CD14-positive monocyte (primary cell): ENCODE measurements at regions of chr1 and their contacts with region 1.

Region 1: DNA sequence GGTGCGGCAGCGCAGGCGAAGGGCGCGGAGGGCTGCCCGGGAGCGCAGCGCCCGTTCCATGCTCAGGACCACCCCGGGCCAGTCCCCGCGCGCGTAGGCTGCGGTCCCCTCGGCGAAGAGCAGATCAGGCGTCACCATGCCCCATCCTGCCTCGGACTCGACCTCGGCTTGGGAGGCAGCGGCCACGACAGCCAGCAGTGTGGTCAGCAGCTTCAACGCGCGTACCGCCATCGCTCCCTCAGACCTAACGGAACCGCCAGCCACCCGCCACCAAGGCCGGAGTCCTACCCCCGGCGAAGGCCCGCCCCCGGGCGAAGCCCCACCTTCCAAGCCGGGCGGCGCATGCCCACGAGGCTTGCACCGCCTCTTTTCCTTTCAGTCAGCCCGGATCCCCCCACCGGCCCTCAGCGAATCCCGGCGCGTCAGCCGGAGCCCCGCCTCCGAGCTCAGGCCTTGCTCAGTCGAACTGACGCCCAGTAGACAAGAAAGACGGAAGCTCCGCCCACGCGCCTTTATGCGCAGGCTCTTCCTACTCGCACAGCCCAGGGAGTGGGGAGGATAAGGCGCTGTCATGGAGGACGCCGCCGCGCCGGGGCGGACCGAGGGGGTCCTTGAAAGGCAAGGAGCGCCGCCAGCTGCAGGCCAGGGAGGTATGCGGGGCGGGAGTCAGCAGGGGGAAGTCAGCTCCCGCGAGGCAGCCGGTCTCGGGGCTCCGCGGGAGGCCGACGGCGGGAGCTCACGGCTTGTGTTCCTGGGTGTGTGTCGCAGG is at the starts of genes C1orf50 and P3H1:
- DNase-seq: peak; percentile 98 to 100 (median 99)
- H3K4me3 ChIP-seq: peak within 1 kb of the TSS; percentile 87 to 94 (median 88)
- H3K4me3 Mint-ChIP-seq: peak within 1 kb of the TSS in 1 of 2 donors; percentile 95
- H3K27ac ChIP-seq: peak within 1 kb of the TSS; percentile 41 to 90
- H3K27ac Mint-ChIP-seq: peak within 1 kb of the TSS in 6 of 7 donors; percentile 86 to 96 (median 93)
- H3K4me1 ChIP-seq: peaks cover 24 to 33% of the 10 kb centered on the region in 2 donors
- H3K4me1 Mint-ChIP-seq: peaks cover 24% of the 10 kb centered on the region
- H3K27me3 ChIP-seq: no peaks in the 10 kb centered on the region
- H3K27me3 Mint-ChIP-seq: no peaks in the 10 kb centered on the region
- CTCF ChIP-seq: no peak
- polyA plus RNA-seq, gene C1orf50: 3.7 to 9.2 (median 4.3) TPM
- polyA plus RNA-seq, gene P3H1: 16.8 to 56.9 (median 16.9) TPM

Region 2: DNA sequence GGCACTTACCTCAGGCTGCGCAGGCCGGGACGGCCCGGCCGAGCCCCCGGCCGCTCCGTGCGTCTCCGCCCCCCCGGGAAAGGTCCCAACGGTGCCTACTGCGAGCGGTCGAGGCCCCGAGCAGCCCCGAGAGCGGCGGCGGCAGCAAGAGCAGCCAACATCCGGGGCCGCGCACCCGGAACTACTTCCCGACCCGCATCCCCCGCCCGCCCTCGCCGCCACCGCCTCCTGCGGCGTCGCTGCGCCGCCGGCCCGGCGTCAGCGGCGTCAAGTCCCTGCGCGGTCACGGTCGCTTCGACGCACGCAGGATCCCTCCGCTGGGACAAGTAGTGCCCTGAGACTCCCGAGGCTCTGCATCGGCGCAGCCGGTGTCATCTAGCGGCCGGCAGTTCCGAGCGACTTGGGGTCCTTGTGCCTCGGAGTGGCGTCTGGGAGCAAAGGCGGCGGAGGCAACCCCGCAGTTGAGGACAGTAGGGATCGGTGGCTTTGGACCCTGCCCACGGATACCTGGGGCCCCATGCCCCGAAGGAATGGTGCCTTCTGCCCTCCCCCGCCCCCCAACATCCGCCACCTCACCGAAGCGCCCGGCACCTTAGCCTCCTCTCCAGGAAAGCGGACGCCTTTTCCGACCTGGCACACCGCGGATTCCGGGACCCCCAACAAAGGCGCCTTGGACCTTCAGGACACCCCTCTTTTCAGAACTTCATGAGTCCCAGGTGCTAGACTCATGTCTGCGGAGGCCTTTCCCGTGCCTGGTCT is 431.7 kb before region 1 on chr1 and contains the start of gene FOXJ3:
- intact Hi-C with region 1: loop called (anchors 10 kb)
- DNase-seq: peak; percentile 84 to 94 (median 90)
- H3K4me3 ChIP-seq: peak within 1 kb of the TSS; percentile 67 to 95 (median 90)
- H3K4me3 Mint-ChIP-seq: peak within 1 kb of the TSS; percentile 90 to 95
- H3K27ac ChIP-seq: peak within 1 kb of the TSS; percentile 66 to 86
- H3K27ac Mint-ChIP-seq: peak within 1 kb of the TSS; percentile 76 to 95 (median 89)
- H3K4me1 ChIP-seq: peaks cover 20 to 28% of the 10 kb centered on the region in 2 donors
- H3K4me1 Mint-ChIP-seq: peaks cover 38% of the 10 kb centered on the region
- H3K27me3 ChIP-seq: no peaks in the 10 kb centered on the region
- H3K27me3 Mint-ChIP-seq: peaks cover 0 to 4% (median 2%) of the 10 kb centered on the region in 3 donors
- CTCF ChIP-seq: no peak
- polyA plus RNA-seq, gene FOXJ3: 10.2 to 18.5 (median 18.4) TPM

Region 3: GRCh38 chr1:42657971-42658879 is 108.7 kb before region 1 on chr1 and contains the start of gene PPIH:
- intact Hi-C with region 1: loop called in 1 of 2 experiments (anchors 5 kb)
- DNase-seq: peak; percentile 88 to 93 (median 89)
- H3K4me3 ChIP-seq: peak within 1 kb of the TSS; percentile 78 to 89 (median 84)
- H3K4me3 Mint-ChIP-seq: peak within 1 kb of the TSS; percentile 93 to 98
- H3K27ac ChIP-seq: peak within 1 kb of the TSS; percentile 57 to 82
- H3K27ac Mint-ChIP-seq: peak within 1 kb of the TSS; percentile 90 to 97 (median 91)
- H3K4me1 ChIP-seq: peaks cover 15 to 18% of the 10 kb centered on the region in 2 donors
- H3K4me1 Mint-ChIP-seq: peaks cover 20% of the 10 kb centered on the region
- H3K27me3 ChIP-seq: no peaks in the 10 kb centered on the region
- H3K27me3 Mint-ChIP-seq: peaks cover 0 to 5% (median 4%) of the 10 kb centered on the region in 3 donors
- CTCF ChIP-seq: no peak
- polyA plus RNA-seq, gene PPIH: 28.1 to 31.0 (median 28.8) TPM

Region 4: GRCh38 chr1:42689912-42690311 is 77.0 kb before region 1 on chr1:
- intact Hi-C with region 1: loop called in 1 of 2 experiments (anchors 5 kb)
- DNase-seq: no peak
- H3K4me3 ChIP-seq: no peak overlapping the region
- H3K4me3 Mint-ChIP-seq: no peak overlapping the region
- H3K27ac ChIP-seq: no peak overlapping the region
- H3K27ac Mint-ChIP-seq: no peak overlapping the region
- H3K4me1 ChIP-seq: peaks cover 4 to 16% of the 10 kb centered on the region in 2 donors
- H3K4me1 Mint-ChIP-seq: peaks cover 46% of the 10 kb centered on the region
- H3K27me3 ChIP-seq: no peaks in the 10 kb centered on the region
- H3K27me3 Mint-ChIP-seq: no peaks in the 10 kb centered on the region
- CTCF ChIP-seq: no peak

Region 5: DNA sequence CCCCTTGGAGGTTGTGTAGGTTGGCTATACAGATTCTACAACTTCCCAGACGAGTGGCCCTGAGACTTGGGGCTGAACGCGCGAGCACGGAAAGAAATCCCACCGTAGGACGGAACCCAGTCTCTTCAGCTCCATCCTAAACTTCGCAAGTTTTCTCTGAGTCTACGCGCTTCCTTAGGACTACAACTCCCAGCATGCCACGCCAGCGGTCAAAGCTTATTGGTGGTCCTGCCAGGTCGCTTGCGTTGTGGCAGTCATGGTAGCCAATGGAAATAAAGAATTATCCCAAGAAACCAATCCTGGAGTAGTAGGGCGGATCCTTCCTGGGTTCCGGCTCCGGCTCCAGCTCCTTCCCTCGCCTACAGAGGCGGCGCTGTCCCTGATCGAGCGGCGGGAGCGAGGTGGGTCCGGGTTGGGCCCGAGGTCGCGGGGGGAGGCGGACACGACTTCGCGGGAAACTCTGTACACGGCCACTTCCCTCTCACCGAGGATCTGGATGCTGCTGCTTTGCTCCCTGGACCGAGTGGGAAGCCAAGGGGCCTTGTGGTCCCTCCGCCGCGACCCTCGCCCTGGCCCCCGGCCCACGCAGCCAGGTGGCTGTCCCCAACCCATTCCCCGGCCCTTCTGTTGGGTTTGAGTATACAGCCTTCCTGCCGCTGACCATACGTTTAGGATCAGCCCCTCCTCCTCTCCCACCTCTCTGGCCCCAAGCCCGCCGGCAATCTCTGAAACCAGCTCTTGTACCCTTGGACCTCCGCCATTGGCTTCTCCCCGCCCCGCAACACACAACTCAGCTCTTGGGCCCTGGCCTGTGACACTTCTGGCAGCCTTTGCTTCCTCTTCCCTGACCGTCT is 79.6 kb after region 1 on chr1 and contains the start of gene ZNF691:
- intact Hi-C with region 1: loop called (anchors 5 to 10 kb)
- DNase-seq: peak; percentile 90 to 97 (median 92)
- H3K4me3 ChIP-seq: peak within 1 kb of the TSS; percentile 66 to 91 (median 77)
- H3K4me3 Mint-ChIP-seq: peak within 1 kb of the TSS; percentile 95 to 98
- H3K27ac ChIP-seq: peak within 1 kb of the TSS; percentile 18 to 80
- H3K27ac Mint-ChIP-seq: peak within 1 kb of the TSS; percentile 54 to 90 (median 85)
- H3K4me1 ChIP-seq: peaks cover 14 to 20% of the 10 kb centered on the region in 2 donors
- H3K4me1 Mint-ChIP-seq: peaks cover 24% of the 10 kb centered on the region
- H3K27me3 ChIP-seq: no peaks in the 10 kb centered on the region
- H3K27me3 Mint-ChIP-seq: peaks cover 0 to 1% (median 0%) of the 10 kb centered on the region in 3 donors
- CTCF ChIP-seq: peak; percentile 37
- polyA plus RNA-seq, gene ZNF691: 1.3 to 6.7 (median 1.8) TPM

Region 6: GRCh38 chr1:42924082-42924850 is 157.3 kb after region 1 on chr1:
- intact Hi-C with region 1: no loop called
- DNase-seq: peak; percentile 89 to 94 (median 90)
- H3K4me3 ChIP-seq: peak overlapping the region; percentile 52 to 87 (median 80)
- H3K4me3 Mint-ChIP-seq: peak overlapping the region; percentile 89 to 93
- H3K27ac ChIP-seq: peak overlapping the region; percentile 32 to 92
- H3K27ac Mint-ChIP-seq: peak overlapping the region; percentile 85 to 94 (median 88)
- H3K4me1 ChIP-seq: peaks cover 14 to 26% of the 10 kb centered on the region in 2 donors
- H3K4me1 Mint-ChIP-seq: peaks cover 27% of the 10 kb centered on the region
- H3K27me3 ChIP-seq: no peaks in the 10 kb centered on the region
- H3K27me3 Mint-ChIP-seq: peaks cover 0 to 2% (median 0%) of the 10 kb centered on the region in 3 donors
- CTCF ChIP-seq: no peak